ENCODE measurements at regions of chr14 and their contacts with region 1.

Region 1: GRCh38 chr14:105086833-105087307 is 21.6 kb upstream of the GPR132 start:
- ATAC-seq: peak; percentile 54 to 81 (median 69)
- H3K4me3 ChIP-seq: peak overlapping the region in 2 of 5 donors; percentile 20 to 26
- H3K27ac ChIP-seq: peak overlapping the region in 1 of 2 donors; percentile 48
- H3K4me1 ChIP-seq: peaks cover 8 to 28% of the 10 kb centered on the region in 2 donors

Region 2: DNA sequence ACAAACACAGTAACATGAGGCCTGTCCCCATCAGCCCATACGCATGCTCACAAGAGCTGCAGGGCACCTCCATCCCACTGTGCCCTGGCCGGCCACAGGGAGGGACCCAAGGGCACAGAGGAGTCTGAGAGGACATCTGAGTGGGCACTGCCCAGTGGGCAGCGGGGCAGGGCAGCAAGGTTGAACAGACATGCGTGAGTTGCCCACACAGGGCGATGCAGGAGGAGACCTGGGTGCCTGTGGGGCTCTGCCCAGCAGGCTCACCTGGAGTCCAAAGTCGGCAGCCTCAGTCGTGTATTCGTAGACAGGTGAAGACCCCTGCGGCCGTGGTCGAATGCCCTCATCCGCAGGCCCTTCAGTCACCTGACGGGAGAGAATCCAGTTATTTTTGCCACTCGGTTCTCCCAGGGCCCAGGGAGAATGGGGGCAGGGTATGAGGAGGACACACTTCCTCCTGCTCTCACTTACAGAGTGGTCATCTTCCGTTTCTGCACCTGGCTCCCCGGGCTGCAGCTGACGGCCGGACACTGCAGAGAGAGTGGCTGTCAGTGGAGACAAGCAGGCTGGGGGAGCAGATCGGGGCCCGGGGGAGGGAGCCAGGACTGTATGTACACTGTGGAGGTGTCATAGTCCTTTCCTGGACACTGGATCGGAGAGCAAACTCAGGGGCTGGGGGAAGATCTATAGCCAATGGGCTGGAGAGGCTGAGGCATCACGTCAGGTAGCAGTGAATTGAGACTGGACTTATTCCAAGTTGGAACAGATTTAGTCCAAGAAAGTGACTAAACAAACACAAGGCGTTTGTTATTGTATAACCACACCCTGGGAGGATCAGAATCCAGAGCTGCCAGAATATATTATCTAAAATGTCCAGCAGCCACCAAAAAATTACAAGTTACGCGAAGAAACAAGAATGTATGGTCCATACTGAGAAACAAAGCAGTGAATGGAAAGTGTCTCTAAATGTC is 129.4 kb before region 1 on chr14:
- in situ Hi-C with region 1: no loop called
- ATAC-seq: peak in 2 of 8 experiments; percentile 62 to 77
- H3K4me3 ChIP-seq: no peak overlapping the region
- H3K27ac ChIP-seq: no peak overlapping the region
- H3K4me1 ChIP-seq: no peaks in the 10 kb centered on the region

Region 3: GRCh38 chr14:105180592-105181548 is 94.0 kb after region 1 on chr14 and contains the start of gene NUDT14:
- in situ Hi-C with region 1: loop called in 1 of 9 experiments (anchors 25 kb)
- ATAC-seq: peak; percentile 79 to 89 (median 84)
- H3K4me3 ChIP-seq: peak within 1 kb of the TSS; percentile 48 to 97 (median 88)
- H3K27ac ChIP-seq: peak within 1 kb of the TSS in 1 of 2 donors; percentile 18
- H3K4me1 ChIP-seq: peaks cover 9 to 27% of the 10 kb centered on the region in 2 donors
- total RNA-seq, gene NUDT14: 11.0 to 26.1 (median 20.8) TPM